Sciatic nerve (tissue), 2 donors: ENCODE measurements at regions of chr11 and their contacts with region 1.

Region 1: DNA sequence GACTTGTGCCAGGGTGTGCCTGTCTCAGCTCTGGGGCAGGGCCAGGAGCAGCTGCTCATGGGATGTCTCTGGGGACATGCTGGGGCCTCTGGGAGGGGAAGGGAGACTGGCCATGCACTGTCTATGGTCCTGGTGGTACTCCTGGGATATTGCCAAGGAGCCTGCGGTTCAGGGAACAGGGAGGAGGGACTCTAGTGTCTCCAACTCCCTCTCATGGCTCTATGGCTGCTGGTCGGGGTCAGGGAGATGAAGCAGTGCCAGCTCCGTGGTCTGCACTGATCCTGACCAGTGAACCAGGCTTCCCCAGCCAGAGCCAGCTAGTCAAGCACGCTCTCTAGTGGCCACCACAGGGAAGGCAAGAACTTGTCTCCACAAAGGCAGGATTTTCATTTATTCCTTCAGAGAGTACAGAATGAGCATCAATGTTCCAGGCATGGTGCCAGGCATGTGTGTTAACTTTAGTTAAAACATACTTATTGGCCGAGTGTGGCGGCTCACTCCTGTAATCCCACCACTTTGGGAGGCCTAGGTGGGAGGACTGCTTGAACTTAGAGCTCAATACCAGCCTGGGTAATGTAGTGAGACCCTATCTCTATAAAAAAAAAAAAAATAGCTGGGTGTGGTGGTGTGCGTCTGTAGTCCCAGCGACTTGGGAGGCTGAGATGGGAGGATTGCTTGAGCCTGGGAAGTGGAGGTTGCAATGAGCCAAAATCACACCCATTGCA is 2.5 kb upstream of the BEST1 start:
- DNase-seq: peak; percentile 95
- ATAC-seq: peak; percentile 81

Region 2: GRCh38 chr11:61874458-61874809 is 73.2 kb before region 1 on chr11:
- intact Hi-C with region 1: no loop called
- DNase-seq: no peak
- ATAC-seq: no peak

Region 3: DNA sequence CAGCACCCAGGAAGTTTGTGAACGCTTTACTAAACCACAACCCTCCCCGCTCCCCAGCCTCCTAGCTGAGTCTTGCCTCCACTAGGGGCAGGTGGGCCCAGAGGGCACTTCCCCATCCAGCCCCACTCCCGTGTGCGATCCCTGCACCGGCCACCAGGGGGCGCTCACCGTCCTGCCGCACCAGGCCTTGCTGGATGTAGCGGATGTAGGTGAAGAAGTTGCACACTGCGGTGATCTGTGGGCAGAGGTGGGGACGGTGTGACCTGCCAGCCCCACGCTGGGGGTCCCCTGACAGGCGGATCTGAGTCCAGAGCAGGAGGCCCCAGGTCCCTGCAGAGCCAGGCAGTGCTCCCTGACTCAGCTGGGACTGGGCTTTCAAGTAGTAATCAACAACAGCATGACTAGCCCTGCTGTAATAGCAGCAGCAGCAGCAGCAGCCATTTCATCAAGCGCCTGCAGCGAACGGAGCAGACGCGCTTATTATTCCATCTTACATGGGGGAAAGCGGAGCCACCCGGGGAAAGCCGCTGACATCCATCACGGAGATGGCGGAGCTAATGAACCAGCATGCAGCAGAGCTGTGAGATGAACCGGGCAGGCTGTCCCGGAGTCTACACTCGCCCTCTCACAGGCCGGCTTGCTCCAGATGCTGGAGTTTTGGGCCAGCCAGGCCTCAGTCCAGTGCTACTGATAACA is 48.4 kb before region 1 on chr11:
- intact Hi-C with region 1: loop called (anchors 5 kb)
- DNase-seq: peak; percentile 93
- ATAC-seq: peak; percentile 86

Region 4: GRCh38 chr11:62061351-62062222 is 113.9 kb after region 1 on chr11:
- intact Hi-C with region 1: loop called (anchors 10 kb)
- DNase-seq: no peak
- ATAC-seq: peak; percentile 91